Sigmoid colon (tissue), 7 donors: ENCODE measurements at regions of chr12 and their contacts with region 1.

Region 1: DNA sequence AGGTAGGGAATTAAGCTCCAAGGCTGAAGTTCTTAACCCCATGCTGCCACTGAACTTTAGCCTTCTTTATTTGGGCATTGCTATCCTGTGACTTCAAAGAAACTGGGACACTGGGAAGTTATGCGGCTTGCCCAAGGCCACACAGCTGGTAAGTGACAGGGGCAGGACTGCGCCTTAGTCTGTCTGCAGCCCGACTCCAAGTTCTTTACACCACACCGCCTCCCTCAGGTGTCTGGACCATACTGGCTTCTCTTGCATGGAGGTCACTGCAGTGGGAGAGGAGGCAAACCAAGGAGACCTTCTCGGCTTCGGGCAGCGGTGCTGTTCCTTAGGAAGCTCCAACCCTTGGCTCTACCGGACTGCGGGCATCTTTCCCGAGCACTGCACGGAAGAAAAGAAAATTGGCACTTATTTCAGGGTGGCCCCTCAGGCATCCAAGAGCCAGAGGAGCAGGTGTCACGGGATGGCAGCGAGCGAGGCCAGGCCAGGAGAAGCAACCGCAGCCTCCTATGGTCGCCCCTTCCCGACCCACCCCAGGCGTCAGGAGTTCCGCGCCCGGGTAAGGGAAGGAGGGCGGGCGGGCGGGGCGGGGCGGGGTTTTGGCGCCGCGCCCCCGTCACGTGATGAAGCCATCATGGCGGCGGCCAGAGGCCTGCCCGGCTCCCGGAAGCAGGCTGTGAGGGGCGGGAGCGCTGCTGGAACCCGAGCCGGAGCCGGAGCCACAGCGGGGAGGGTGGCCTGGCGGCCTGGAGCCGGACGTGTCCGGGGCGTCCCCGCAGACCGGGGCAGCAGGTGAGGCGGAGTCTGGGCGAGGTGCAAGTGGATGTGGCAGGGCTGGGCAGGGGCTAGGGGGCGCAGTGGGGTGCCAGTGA is 16.4 kb upstream of the ESPL1 start:
- DNase-seq: peak; percentile 91
- H3K4me3 ChIP-seq: peak overlapping the region; percentile 79 to 98 (median 90)
- H3K27ac ChIP-seq: peak overlapping the region; percentile 95 to 97 (median 96)
- H3K4me1 ChIP-seq: peaks cover 0 to 41% (median 27%) of the 10 kb centered on the region in 4 donors
- H3K27me3 ChIP-seq: no peaks in the 10 kb centered on the region
- CTCF ChIP-seq: peak in 2 of 4 experiments; percentile 17 to 27
- EP300 ChIP-seq: no peak
- POLR2A ChIP-seq: peak; percentile 64 to 68

Region 2: DNA sequence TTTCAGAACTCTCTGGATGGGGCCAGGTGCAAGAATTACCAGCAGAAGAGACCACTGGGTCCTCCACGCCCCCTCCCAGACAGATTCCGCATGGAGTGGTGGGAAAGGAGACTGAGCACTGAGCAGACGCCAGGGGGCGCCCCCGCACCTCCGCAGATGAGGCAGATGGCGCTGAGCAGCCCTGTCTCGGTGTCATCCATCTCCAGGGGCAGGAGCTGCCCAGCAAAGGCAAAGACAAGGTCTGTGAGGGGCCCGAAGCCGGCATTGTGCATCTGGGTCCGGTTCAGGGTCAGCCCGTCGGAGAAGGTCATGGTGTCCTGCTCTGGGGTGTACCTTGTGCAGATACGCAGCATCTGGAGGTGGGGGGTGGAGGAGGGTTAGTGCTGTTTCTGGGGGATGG is 38.4 kb before region 1 on chr12:
- intact Hi-C with region 1: loop called (anchors 1 kb)
- DNase-seq: peak; percentile 91
- H3K4me3 ChIP-seq: no peak overlapping the region
- H3K27ac ChIP-seq: peak overlapping the region in 2 of 4 donors; percentile 25 to 26
- H3K4me1 ChIP-seq: peaks cover 0 to 59% (median 51%) of the 10 kb centered on the region in 4 donors
- H3K27me3 ChIP-seq: no peaks in the 10 kb centered on the region
- CTCF ChIP-seq: peak; percentile 94 to 97 (median 97)
- EP300 ChIP-seq: no peak
- POLR2A ChIP-seq: no peak

Region 3: GRCh38 chr12:53220801-53221202 is 30.9 kb before region 1 on chr12:
- intact Hi-C with region 1: loop called (anchors 2 kb)
- DNase-seq: peak; percentile 95
- H3K4me3 ChIP-seq: peak overlapping the region; percentile 67 to 89 (median 81)
- H3K27ac ChIP-seq: peak overlapping the region; percentile 95 to 100 (median 99)
- H3K4me1 ChIP-seq: peaks cover 0 to 79% (median 68%) of the 10 kb centered on the region in 4 donors
- H3K27me3 ChIP-seq: no peaks in the 10 kb centered on the region
- CTCF ChIP-seq: no peak
- EP300 ChIP-seq: no peak
- POLR2A ChIP-seq: no peak

Region 4: DNA sequence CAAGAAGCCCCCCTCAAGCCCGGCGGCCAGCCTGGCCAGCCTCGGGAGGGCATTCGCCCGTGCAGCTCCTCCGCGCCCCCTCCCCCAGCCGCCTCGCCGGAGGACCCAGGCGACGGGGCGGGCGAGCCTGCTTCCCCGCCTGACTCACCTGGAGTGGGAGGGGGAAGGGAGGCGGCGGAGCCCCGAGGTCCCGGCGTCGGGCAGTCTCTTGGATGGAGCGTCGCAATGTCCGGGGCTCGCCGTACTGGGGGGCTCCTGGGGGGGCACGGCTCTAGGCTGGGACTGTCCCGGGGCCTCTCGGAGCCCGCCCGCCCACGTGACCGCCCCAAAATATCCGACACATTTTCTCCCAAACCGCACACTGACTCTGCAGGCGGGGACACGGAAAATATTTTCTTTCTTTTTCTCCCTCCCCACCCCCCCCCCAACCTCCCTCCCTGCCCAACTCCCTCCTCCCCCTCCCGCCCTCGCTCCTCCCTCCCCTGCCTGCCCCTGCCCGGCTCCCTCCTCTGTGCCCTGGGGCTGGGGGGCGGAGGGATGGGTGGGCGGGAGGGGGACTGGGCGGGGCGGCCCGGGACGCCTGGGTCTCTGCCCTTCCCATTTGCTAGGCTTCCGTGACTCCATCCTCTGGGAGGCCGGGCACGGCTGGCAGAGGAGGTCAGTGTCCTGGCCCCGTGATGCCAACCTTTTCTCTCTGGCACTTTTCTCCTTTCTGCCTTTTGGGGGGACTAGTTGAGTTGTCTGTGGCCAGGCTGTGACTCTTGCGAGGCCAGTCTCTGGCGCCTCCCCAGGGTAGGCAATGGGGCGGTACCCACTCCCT is 19.7 kb before region 1 on chr12 and contains the start of gene RARG:
- intact Hi-C with region 1: loop called (anchors 2 kb)
- DNase-seq: peak; percentile 85
- H3K4me3 ChIP-seq: peak within 1 kb of the TSS; percentile 61 to 80 (median 74)
- H3K27ac ChIP-seq: peak within 1 kb of the TSS; percentile 81 to 92 (median 90)
- H3K4me1 ChIP-seq: peaks cover 0 to 45% (median 38%) of the 10 kb centered on the region in 4 donors
- H3K27me3 ChIP-seq: no peaks in the 10 kb centered on the region
- CTCF ChIP-seq: no peak
- EP300 ChIP-seq: no peak
- POLR2A ChIP-seq: no peak
- total RNA-seq, gene RARG: 9.9 to 17.2 (median 15.4) TPM

Region 5: GRCh38 chr12:53476769-53477209 is 225.1 kb after region 1 on chr12:
- intact Hi-C with region 1: no loop called
- DNase-seq: no peak
- H3K4me3 ChIP-seq: no peak overlapping the region
- H3K27ac ChIP-seq: peak overlapping the region in 3 of 4 donors; percentile 6 to 29 (median 27)
- H3K4me1 ChIP-seq: peaks cover 0 to 43% (median 20%) of the 10 kb centered on the region in 4 donors
- H3K27me3 ChIP-seq: no peaks in the 10 kb centered on the region
- CTCF ChIP-seq: no peak
- EP300 ChIP-seq: no peak
- POLR2A ChIP-seq: no peak

Region 6: GRCh38 chr12:53652366-53652765 is 400.7 kb after region 1 on chr12:
- intact Hi-C with region 1: no loop called
- DNase-seq: no peak
- H3K4me3 ChIP-seq: no peak overlapping the region
- H3K27ac ChIP-seq: no peak overlapping the region
- H3K4me1 ChIP-seq: no peaks in the 10 kb centered on the region
- H3K27me3 ChIP-seq: no peaks in the 10 kb centered on the region
- CTCF ChIP-seq: no peak
- EP300 ChIP-seq: no peak
- POLR2A ChIP-seq: no peak